Heart left ventricle (tissue), 16 donors: ENCODE measurements at regions of chr9 and their contacts with region 1.

Region 1: DNA sequence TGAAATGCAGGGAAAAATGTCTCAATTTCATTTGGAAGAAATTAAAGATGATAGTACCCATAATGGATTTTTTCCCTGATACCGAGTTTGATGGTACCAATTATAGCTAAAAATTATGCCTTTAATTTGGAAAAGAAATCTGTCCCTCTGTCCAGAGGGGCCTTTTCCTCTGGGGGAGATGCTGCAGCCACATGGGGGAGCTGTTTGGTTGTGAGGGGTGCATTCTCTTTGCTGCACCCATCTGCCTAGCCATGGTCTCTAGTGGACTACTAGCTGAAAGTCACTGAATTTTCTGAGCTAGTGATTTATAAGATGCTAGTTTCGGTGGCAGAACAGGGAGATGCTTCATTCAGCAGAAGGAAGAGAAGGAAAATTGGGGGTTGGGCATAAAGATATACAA is 9.6 kb downstream of the SEC61B start:
- DNase-seq: peak in 1 of 5 donors; percentile 33
- ATAC-seq: peak in 2 of 4 donors; percentile 59 to 68
- H3K4me3 ChIP-seq: no peak overlapping the region
- H3K27ac ChIP-seq: no peak overlapping the region
- H3K4me1 ChIP-seq: peaks cover 0 to 14% (median 0%) of the 10 kb centered on the region in 12 donors
- H3K27me3 ChIP-seq: no peaks in the 10 kb centered on the region
- CTCF ChIP-seq: peak in 11 of 12 donors; percentile 24 to 56 (median 46)
- POLR2A ChIP-seq: no peak

Region 2: GRCh38 chr9:99921875-99922710 is 690.4 kb after region 1 on chr9:
- intact Hi-C with region 1: loop called in 1 of 10 experiments (anchors 10 kb)
- DNase-seq: no peak
- ATAC-seq: peak in 1 of 4 donors; percentile 10
- H3K4me3 ChIP-seq: no peak overlapping the region
- H3K27ac ChIP-seq: no peak overlapping the region
- H3K4me1 ChIP-seq: peaks cover 0 to 5% (median 0%) of the 10 kb centered on the region in 12 donors
- H3K27me3 ChIP-seq: no peaks in the 10 kb centered on the region
- CTCF ChIP-seq: no peak
- POLR2A ChIP-seq: no peak